Heart left ventricle (tissue), 16 donors: ENCODE measurements at regions of chr12 and their contacts with region 1.

Region 1: GRCh38 chr12:42735861-42736361 is 146.4 kb upstream of the PRICKLE1 start:
- DNase-seq: peak; percentile 57 to 90 (median 77)
- ATAC-seq: peak; percentile 94 to 96 (median 96)
- H3K4me3 ChIP-seq: peak overlapping the region in 6 of 12 donors; percentile 13 to 48 (median 32)
- H3K27ac ChIP-seq: peak overlapping the region; percentile 9 to 91 (median 70)
- H3K4me1 ChIP-seq: peaks cover 0 to 32% (median 10%) of the 10 kb centered on the region in 12 donors
- H3K27me3 ChIP-seq: no peaks in the 10 kb centered on the region
- CTCF ChIP-seq: no peak
- POLR2A ChIP-seq: no peak

Region 2: GRCh38 chr12:42716491-42716891 is 19.4 kb before region 1 on chr12:
- intact Hi-C with region 1: no loop called
- DNase-seq: peak in 1 of 5 donors; percentile 47
- ATAC-seq: peak; percentile 32 to 99 (median 60)
- H3K4me3 ChIP-seq: no peak overlapping the region
- H3K27ac ChIP-seq: peak overlapping the region in 5 of 12 donors; percentile 10 to 57 (median 24)
- H3K4me1 ChIP-seq: peaks cover 0 to 3% (median 0%) of the 10 kb centered on the region in 12 donors
- H3K27me3 ChIP-seq: no peaks in the 10 kb centered on the region
- CTCF ChIP-seq: no peak
- POLR2A ChIP-seq: no peak

Region 3: GRCh38 chr12:42790761-42791151 is 54.8 kb after region 1 on chr12:
- intact Hi-C with region 1: loop called in 1 of 10 experiments (anchors 2 kb)
- DNase-seq: no peak
- ATAC-seq: peak in 1 of 4 donors; percentile 56
- H3K4me3 ChIP-seq: no peak overlapping the region
- H3K27ac ChIP-seq: peak overlapping the region in 1 of 12 donors; percentile 49
- H3K4me1 ChIP-seq: peaks cover 0 to 17% (median 2%) of the 10 kb centered on the region in 12 donors
- H3K27me3 ChIP-seq: no peaks in the 10 kb centered on the region
- CTCF ChIP-seq: no peak
- POLR2A ChIP-seq: no peak

Region 4: GRCh38 chr12:42846782-42847181 is 110.9 kb after region 1 on chr12:
- intact Hi-C with region 1: no loop called
- DNase-seq: no peak
- ATAC-seq: no peak
- H3K4me3 ChIP-seq: no peak overlapping the region
- H3K27ac ChIP-seq: no peak overlapping the region
- H3K4me1 ChIP-seq: no peaks in the 10 kb centered on the region
- H3K27me3 ChIP-seq: no peaks in the 10 kb centered on the region
- CTCF ChIP-seq: no peak
- POLR2A ChIP-seq: no peak

Region 5: DNA sequence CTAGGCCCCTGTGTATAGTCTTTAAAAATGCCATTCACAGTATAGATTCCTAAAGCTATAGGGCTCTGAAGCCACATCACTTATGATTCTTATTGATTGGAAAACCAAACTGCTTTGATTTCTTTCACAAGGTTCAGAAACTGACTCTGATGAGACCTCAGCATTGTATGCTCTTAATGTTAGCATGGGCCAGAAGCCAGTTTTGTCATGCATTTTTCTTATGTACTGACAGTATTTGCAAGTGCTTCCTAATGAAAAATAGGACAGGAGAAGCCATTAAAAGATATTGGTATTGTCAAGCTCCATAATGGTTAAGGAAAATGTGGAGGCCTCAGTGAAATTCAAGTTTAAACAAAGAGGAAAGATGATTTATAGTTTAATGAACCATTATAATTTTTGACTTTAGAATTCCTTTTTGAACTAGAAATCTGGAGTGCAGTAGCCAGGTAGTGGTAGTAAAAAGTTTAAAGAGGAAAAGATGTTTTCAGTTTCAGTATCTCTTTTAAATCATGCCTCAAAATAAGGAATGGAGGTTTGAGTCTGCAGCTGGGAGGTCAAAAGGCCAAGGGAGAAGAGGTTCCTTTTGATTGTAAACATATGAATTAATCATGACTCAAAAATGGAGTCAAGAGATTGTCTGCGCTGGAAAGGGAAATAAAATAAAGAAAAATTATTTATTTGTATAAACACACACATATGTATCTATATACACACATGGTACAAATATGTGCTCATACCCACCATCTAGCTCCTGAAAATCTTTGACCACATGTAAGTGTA is 241.7 kb after region 1 on chr12:
- intact Hi-C with region 1: loop called in 1 of 10 experiments (anchors 10 kb)
- DNase-seq: no peak
- ATAC-seq: no peak
- H3K4me3 ChIP-seq: no peak overlapping the region
- H3K27ac ChIP-seq: peak overlapping the region in 4 of 12 donors; percentile 28 to 82 (median 60)
- H3K4me1 ChIP-seq: peaks cover 0 to 27% (median 0%) of the 10 kb centered on the region in 12 donors
- H3K27me3 ChIP-seq: no peaks in the 10 kb centered on the region
- CTCF ChIP-seq: no peak
- POLR2A ChIP-seq: no peak

Region 6: DNA sequence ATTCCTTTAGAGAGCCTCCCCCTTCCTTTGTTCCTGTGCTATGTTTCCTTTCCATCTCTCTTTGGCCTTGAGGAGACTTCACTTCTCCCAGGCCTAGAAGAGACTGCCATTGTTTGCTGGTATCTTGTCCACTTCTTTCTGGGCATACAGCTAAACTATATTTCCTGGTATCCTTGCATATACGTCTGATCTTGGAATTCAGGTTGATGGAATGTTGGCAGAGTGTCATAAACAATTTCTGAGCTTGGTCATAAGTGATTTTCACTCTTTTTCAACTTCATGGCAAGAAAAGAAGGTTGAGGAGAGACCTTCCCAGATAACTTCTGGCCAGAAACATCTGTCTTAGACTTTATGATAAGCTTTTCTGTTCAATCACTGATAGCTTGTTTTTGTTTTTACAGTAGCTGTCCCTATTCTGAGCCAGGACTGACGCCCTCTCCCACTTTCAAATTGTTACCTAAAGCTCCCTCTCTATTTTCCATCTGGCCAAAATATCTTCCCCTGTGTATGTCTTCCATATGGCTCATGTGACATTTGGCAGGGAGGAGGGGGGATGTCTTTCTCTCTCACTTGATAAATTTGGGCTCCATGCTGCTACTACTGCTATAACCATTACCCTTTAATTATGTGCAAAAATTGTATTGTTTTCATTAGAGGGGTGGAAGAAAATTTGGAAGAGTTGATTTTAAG is 359.1 kb after region 1 on chr12:
- intact Hi-C with region 1: no loop called
- DNase-seq: no peak
- ATAC-seq: no peak
- H3K4me3 ChIP-seq: no peak overlapping the region
- H3K27ac ChIP-seq: no peak overlapping the region
- H3K4me1 ChIP-seq: peaks cover 0 to 8% (median 0%) of the 10 kb centered on the region in 12 donors
- H3K27me3 ChIP-seq: no peaks in the 10 kb centered on the region
- CTCF ChIP-seq: no peak
- POLR2A ChIP-seq: no peak